Ascending aorta (tissue), 2 donors: ENCODE measurements at regions of chr18 and their contacts with region 1.

Region 1: GRCh38 chr18:57881818-57882413 is 78.8 kb upstream of the ATP8B1 start:
- DNase-seq: peak in 1 of 2 donors; percentile 80
- H3K4me3 ChIP-seq: no peak overlapping the region
- H3K27ac ChIP-seq: no peak overlapping the region
- H3K4me1 ChIP-seq: no peaks in the 10 kb centered on the region
- H3K27me3 ChIP-seq: no peaks in the 10 kb centered on the region
- CTCF ChIP-seq: peak; percentile 75 to 92 (median 85)

Region 2: GRCh38 chr18:57630002-57630753 is 251.7 kb before region 1 on chr18:
- intact Hi-C with region 1: loop called (anchors 2 kb)
- DNase-seq: peak; percentile 90 to 98
- H3K4me3 ChIP-seq: peak overlapping the region; percentile 67 to 90
- H3K27ac ChIP-seq: peak overlapping the region; percentile 58 to 71
- H3K4me1 ChIP-seq: no peaks in the 10 kb centered on the region
- H3K27me3 ChIP-seq: no peaks in the 10 kb centered on the region
- CTCF ChIP-seq: peak; percentile 73 to 88 (median 86)

Region 3: GRCh38 chr18:58124475-58124874 is 242.6 kb after region 1 on chr18:
- intact Hi-C with region 1: loop called (anchors 5 kb)
- DNase-seq: no peak
- H3K4me3 ChIP-seq: no peak overlapping the region
- H3K27ac ChIP-seq: no peak overlapping the region
- H3K4me1 ChIP-seq: no peaks in the 10 kb centered on the region
- H3K27me3 ChIP-seq: no peaks in the 10 kb centered on the region
- CTCF ChIP-seq: no peak